ENCODE measurements at regions of chr4 and their contacts with region 1.

Region 1: DNA sequence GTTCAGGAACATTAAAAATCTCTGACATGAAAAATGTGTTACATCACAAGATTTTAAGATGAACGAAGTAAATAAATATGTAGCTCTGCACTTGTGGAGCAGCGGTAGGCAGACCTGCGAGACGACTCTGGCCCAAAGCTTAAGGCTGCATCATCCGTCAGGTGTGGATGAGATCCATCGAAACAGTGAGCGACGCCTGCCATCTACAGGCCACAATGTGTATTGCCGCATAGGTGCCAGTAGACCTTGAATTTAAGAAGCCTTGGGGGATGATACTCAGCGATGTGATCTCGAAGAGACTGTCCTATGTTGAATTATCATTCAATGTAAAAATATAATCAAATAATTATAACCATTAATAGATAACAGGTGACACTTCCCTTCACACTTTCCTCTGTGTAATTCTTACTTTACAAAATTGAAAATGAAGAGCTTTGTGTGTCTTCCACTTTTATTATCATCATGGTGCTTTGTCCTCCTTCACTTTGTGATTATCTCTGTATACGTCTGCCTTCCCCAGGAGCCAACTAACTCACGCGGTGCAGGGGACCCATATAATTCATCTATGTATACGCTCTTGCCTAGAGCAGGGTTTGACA is 851.0 kb downstream of the RAB28 start:
- DNase-seq: peak; percentile 73
- H3K4me3 ChIP-seq: no peak overlapping the region
- H3K27ac ChIP-seq: no peak overlapping the region
- H3K4me1 ChIP-seq: no peaks in the 10 kb centered on the region
- H3K27me3 ChIP-seq: no peaks in the 10 kb centered on the region
- CTCF ChIP-seq: peak; percentile 62 to 86 (median 78)
- EP300 ChIP-seq: no peak
- POLR2A ChIP-seq: no peak

Region 2: GRCh38 chr4:11765849-11766453 is 867.2 kb before region 1 on chr4:
- intact Hi-C with region 1: loop called (anchors 5 kb)
- DNase-seq: no peak
- H3K4me3 ChIP-seq: no peak overlapping the region
- H3K27ac ChIP-seq: no peak overlapping the region
- H3K4me1 ChIP-seq: peaks cover 0 to 13% (median 5%) of the 10 kb centered on the region in 4 donors
- H3K27me3 ChIP-seq: no peaks in the 10 kb centered on the region
- CTCF ChIP-seq: peak in 2 of 4 experiments; percentile 38 to 58
- EP300 ChIP-seq: no peak
- POLR2A ChIP-seq: no peak

Region 3: GRCh38 chr4:12041828-12042227 is 591.3 kb before region 1 on chr4:
- intact Hi-C with region 1: loop called (anchors 10 kb)
- DNase-seq: no peak
- H3K4me3 ChIP-seq: no peak overlapping the region
- H3K27ac ChIP-seq: no peak overlapping the region
- H3K4me1 ChIP-seq: no peaks in the 10 kb centered on the region
- H3K27me3 ChIP-seq: no peaks in the 10 kb centered on the region
- CTCF ChIP-seq: peak in 1 of 4 experiments; percentile 22
- EP300 ChIP-seq: no peak
- POLR2A ChIP-seq: no peak